ENCODE measurements at regions of chr2 and their contacts with region 1.

Region 1: GRCh38 chr2:189412330-189412953 is 28.8 kb upstream of the WDR75 start:
- DNase-seq: peak in 1 of 2 experiments; percentile 63
- H3K4me3 ChIP-seq: no peak overlapping the region
- H3K4me3 Mint-ChIP-seq: no peak overlapping the region
- H3K27ac Mint-ChIP-seq: no peak overlapping the region
- H3K4me1 ChIP-seq: peaks cover 16% of the 10 kb centered on the region
- H3K4me1 Mint-ChIP-seq: no peaks in the 10 kb centered on the region
- H3K27me3 ChIP-seq: no peaks in the 10 kb centered on the region
- H3K27me3 Mint-ChIP-seq: no peaks in the 10 kb centered on the region
- CTCF ChIP-seq: peak; percentile 71 to 74

Region 2: GRCh38 chr2:188765522-188766470 is 646.6 kb before region 1 on chr2:
- CTCF ChIA-PET with region 1: no interaction called
- POLR2A ChIA-PET with region 1: no interaction called
- intact Hi-C with region 1: loop called (anchors 1 kb)
- DNase-seq: peak; percentile 48 to 62
- H3K4me3 ChIP-seq: no peak overlapping the region
- H3K4me3 Mint-ChIP-seq: no peak overlapping the region
- H3K27ac Mint-ChIP-seq: no peak overlapping the region
- H3K4me1 ChIP-seq: no peaks in the 10 kb centered on the region
- H3K4me1 Mint-ChIP-seq: no peaks in the 10 kb centered on the region
- H3K27me3 ChIP-seq: no peaks in the 10 kb centered on the region
- H3K27me3 Mint-ChIP-seq: peaks cover 2% of the 10 kb centered on the region
- CTCF ChIP-seq: peak; percentile 39 to 75

Region 3: DNA sequence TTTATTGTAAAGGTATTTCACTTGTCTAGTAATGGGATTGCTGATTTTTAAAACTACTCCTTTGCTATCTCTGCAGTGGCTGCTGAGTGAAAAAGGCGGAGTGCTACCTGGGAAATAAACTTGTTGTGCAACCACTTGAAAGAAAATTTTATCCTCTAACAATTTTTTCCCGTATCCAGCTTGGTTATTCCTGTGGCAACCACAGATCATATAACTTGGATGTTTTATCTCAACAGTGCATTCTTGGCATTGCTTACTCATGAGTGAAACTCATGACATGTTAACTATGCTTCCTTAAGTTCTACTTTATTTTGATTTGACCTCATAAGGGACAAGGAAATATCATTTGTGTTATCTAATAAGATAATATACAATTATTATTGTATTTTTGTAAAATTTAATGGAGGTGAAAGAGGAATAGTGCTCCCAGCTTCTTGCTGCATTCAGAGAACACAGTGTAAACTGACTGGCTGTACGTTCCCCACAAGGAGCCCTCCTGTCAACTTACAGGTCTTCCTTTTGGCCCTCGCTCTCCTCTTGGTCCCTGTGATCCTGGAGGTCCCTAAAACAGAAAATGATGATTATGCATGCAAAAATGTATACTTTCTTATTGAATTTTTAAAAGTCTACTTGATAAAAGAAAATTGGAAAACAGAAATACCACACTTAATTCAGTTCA is 315.5 kb before region 1 on chr2:
- CTCF ChIA-PET with region 1: interaction called, 4 read pairs
- POLR2A ChIA-PET with region 1: no interaction called
- intact Hi-C with region 1: loop called (anchors 1 kb)
- DNase-seq: peak in 1 of 2 experiments; percentile 52
- H3K4me3 ChIP-seq: no peak overlapping the region
- H3K4me3 Mint-ChIP-seq: no peak overlapping the region
- H3K27ac Mint-ChIP-seq: peak overlapping the region; percentile 70
- H3K4me1 ChIP-seq: peaks cover 19% of the 10 kb centered on the region
- H3K4me1 Mint-ChIP-seq: peaks cover 21% of the 10 kb centered on the region
- H3K27me3 ChIP-seq: no peaks in the 10 kb centered on the region
- H3K27me3 Mint-ChIP-seq: no peaks in the 10 kb centered on the region
- CTCF ChIP-seq: no peak

Region 4: DNA sequence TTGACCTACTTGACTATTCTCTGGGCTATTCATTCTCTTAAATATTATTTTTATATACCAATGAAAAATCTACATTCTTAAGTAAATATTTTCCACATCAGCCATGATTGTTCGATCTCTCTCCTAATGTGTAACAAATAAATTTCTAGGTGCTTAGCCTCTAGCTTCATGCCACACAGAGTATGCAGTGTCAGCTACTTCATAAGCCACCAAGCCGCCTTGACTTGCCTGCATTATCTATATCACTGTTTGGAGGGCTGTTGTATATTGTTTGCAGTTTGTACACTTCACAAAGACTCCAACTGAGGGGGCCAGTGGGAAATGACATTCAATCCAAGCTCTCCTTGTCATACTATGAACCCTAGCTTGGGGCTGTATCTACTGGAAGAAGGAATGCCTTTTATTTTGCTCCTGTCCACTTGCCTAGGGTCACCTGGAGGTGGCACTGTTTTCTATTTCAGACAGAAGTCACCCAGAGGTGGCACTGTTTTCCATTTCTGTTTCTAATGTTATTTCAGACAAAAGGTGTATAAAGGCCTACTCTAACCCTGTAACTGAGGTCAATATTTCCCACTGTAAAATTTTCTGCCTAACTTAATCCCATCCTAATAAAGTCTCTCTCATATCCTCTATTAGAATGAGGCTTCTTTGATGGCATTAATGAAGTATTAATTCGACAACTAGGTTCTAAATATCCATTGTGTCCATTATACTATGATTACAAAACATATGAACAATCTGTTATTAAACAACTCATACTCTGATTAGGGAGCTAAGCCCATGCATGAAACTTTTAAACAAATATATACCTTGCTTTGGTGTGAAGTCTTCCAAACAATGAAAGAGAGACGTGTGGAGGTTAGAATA is 269.3 kb before region 1 on chr2:
- CTCF ChIA-PET with region 1: interaction called, 3 read pairs
- POLR2A ChIA-PET with region 1: no interaction called
- intact Hi-C with region 1: loop called (anchors 1 kb)
- DNase-seq: peak; percentile 75 to 80
- H3K4me3 ChIP-seq: no peak overlapping the region
- H3K4me3 Mint-ChIP-seq: no peak overlapping the region
- H3K27ac Mint-ChIP-seq: peak overlapping the region; percentile 17
- H3K4me1 ChIP-seq: peaks cover 12% of the 10 kb centered on the region
- H3K4me1 Mint-ChIP-seq: peaks cover 20% of the 10 kb centered on the region
- H3K27me3 ChIP-seq: no peaks in the 10 kb centered on the region
- H3K27me3 Mint-ChIP-seq: no peaks in the 10 kb centered on the region
- CTCF ChIP-seq: peak; percentile 93 to 99

Region 5: GRCh38 chr2:189347540-189347939 is 64.9 kb before region 1 on chr2:
- CTCF ChIA-PET with region 1: no interaction called
- POLR2A ChIA-PET with region 1: no interaction called
- intact Hi-C with region 1: loop called (anchors 1 kb)
- DNase-seq: peak; percentile 62 to 69
- H3K4me3 ChIP-seq: no peak overlapping the region
- H3K4me3 Mint-ChIP-seq: no peak overlapping the region
- H3K27ac Mint-ChIP-seq: peak overlapping the region; percentile 4
- H3K4me1 ChIP-seq: peaks cover 6% of the 10 kb centered on the region
- H3K4me1 Mint-ChIP-seq: peaks cover 17% of the 10 kb centered on the region
- H3K27me3 ChIP-seq: no peaks in the 10 kb centered on the region
- H3K27me3 Mint-ChIP-seq: no peaks in the 10 kb centered on the region
- CTCF ChIP-seq: peak in 1 of 2 experiments; percentile 19

Region 6: GRCh38 chr2:189379287-189379630 is 33.2 kb before region 1 on chr2:
- CTCF ChIA-PET with region 1: no interaction called
- POLR2A ChIA-PET with region 1: no interaction called
- intact Hi-C with region 1: loop called (anchors 2 kb)
- DNase-seq: peak; percentile 74 to 81
- H3K4me3 ChIP-seq: no peak overlapping the region
- H3K4me3 Mint-ChIP-seq: peak overlapping the region; percentile 53
- H3K27ac Mint-ChIP-seq: peak overlapping the region; percentile 63
- H3K4me1 ChIP-seq: peaks cover 56% of the 10 kb centered on the region
- H3K4me1 Mint-ChIP-seq: peaks cover 29% of the 10 kb centered on the region
- H3K27me3 ChIP-seq: no peaks in the 10 kb centered on the region
- H3K27me3 Mint-ChIP-seq: no peaks in the 10 kb centered on the region
- CTCF ChIP-seq: no peak

Region 7: GRCh38 chr2:189454009-189454408 is 41.6 kb after region 1 on chr2:
- CTCF ChIA-PET with region 1: no interaction called
- POLR2A ChIA-PET with region 1: no interaction called
- intact Hi-C with region 1: no loop called
- DNase-seq: no peak
- H3K4me3 ChIP-seq: no peak overlapping the region
- H3K4me3 Mint-ChIP-seq: no peak overlapping the region
- H3K27ac Mint-ChIP-seq: no peak overlapping the region
- H3K4me1 ChIP-seq: no peaks in the 10 kb centered on the region
- H3K4me1 Mint-ChIP-seq: no peaks in the 10 kb centered on the region
- H3K27me3 ChIP-seq: no peaks in the 10 kb centered on the region
- H3K27me3 Mint-ChIP-seq: no peaks in the 10 kb centered on the region
- CTCF ChIP-seq: no peak

Measured in Caco-2 (cell line).